ENCODE measurements at regions of chr10 and their contacts with region 1.

Region 1: DNA sequence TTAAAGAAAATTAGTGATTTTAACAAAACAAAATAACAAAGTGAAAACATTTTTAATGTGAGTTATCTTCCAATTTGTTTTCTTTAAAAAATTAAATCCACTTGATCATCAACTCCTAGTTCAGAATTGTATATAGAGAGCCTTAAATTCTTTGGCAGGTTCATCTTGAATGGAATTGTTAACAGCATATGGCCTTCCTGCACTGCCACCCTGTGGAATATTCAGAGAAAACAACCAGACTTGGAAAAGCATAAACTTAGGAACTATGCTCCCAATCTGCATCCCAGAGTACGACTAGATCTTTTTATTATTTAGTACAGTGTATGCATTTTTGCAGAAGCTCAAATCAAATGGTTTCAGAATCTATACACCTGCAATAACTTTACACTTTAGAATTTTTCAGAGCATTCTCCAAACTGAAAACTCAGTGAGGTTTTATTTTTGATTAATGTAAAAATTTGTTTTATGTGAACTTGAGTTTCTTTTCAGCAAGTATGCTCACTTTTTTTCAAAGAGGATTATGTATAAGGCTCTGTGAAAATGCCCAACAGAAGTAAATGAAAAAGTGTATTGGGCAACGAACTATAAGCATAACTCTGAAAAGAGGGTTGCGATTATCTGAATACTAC is 44.9 kb upstream of the ANK3 start:
- DNase-seq: peak; percentile 33 to 55
- H3K4me3 ChIP-seq: no peak overlapping the region
- H3K27ac ChIP-seq: no peak overlapping the region
- H3K4me1 ChIP-seq: no peaks in the 10 kb centered on the region
- H3K27me3 ChIP-seq: no peaks in the 10 kb centered on the region
- CTCF ChIP-seq: peak; percentile 93

Region 2: DNA sequence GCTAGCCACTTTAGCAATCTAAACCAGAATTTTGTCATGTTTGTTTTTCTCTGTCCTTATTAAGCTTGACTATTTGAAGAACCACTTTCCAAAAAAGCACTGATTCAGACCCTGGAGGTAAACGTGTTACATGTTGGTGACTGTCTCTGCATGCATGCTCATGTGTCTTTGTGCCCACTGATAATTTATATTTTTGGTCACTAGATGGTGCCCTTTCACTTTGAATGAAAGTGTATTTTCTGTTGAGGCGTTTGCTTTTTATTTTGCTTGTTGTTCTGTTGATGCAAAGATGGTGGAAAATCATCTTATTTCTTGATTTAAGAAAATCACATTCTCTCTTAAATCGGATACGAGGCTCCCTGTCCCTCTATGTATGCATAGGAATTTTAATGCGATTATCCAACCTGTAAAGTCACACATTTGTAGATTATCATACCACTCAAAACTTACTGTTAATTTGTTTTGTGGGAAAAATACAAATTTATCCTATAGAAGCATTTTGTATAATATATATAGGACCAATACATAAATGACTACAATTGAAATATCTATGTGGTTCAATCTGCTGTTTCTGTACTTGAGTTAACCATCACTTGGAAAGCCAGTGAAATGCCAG is 1652.6 kb before region 1 on chr10:
- CTCF ChIA-PET with region 1: no interaction called
- POLR2A ChIA-PET with region 1: no interaction called
- intact Hi-C with region 1: loop called (anchors 5 kb)
- DNase-seq: peak in 1 of 2 experiments; percentile 4
- H3K4me3 ChIP-seq: no peak overlapping the region
- H3K27ac ChIP-seq: no peak overlapping the region
- H3K4me1 ChIP-seq: no peaks in the 10 kb centered on the region
- H3K27me3 ChIP-seq: no peaks in the 10 kb centered on the region
- CTCF ChIP-seq: peak; percentile 84

Region 3: GRCh38 chr10:59934701-59935100 is 499.8 kb before region 1 on chr10:
- CTCF ChIA-PET with region 1: no interaction called
- POLR2A ChIA-PET with region 1: no interaction called
- intact Hi-C with region 1: no loop called
- DNase-seq: no peak
- H3K4me3 ChIP-seq: no peak overlapping the region
- H3K27ac ChIP-seq: no peak overlapping the region
- H3K4me1 ChIP-seq: no peaks in the 10 kb centered on the region
- H3K27me3 ChIP-seq: no peaks in the 10 kb centered on the region
- CTCF ChIP-seq: no peak

Region 4: DNA sequence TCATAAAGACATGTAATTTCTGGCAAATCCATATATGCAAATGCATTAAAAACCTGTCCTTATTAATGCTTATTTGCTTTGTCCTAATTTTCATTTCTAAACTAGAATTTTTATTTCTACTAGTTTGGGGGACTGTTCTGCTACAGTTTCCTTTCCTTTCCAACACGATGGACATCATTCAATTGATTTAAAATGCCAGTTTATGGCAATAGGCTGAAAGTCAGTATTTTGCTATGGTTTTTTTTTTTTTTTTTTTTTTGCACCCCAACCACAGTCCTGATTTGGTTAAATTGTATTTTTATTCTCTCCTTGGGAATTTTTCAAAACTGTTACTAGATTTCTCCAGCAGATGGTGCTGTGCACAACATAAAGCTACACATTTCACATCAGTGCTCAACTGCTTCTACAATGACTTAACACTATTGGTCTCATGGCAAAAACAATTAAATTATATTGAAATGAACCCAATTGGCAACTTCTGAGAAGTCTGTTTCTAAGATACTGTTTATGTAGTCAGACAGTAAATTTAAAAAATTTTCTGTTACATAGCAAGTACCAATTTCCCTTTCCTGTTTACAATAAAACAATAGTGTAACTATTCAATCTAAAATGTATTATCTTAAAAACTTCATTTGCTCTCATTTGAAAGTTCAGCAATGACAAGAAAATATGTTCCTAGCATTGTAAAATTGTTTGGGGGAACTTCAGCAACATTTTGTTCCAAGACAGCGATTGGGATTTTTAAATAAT is 334.4 kb before region 1 on chr10:
- CTCF ChIA-PET with region 1: no interaction called
- POLR2A ChIA-PET with region 1: no interaction called
- intact Hi-C with region 1: loop called (anchors 1 kb)
- DNase-seq: peak; percentile 15 to 59
- H3K4me3 ChIP-seq: no peak overlapping the region
- H3K27ac ChIP-seq: no peak overlapping the region
- H3K4me1 ChIP-seq: no peaks in the 10 kb centered on the region; the same call in 1 of the 2 replicates
- H3K27me3 ChIP-seq: no peaks in the 10 kb centered on the region
- CTCF ChIP-seq: peak; percentile 86

Region 5: GRCh38 chr10:60208676-60209269 is 225.8 kb before region 1 on chr10:
- CTCF ChIA-PET with region 1: interaction called, 3 read pairs
- POLR2A ChIA-PET with region 1: no interaction called
- intact Hi-C with region 1: loop called (anchors 1 kb)
- DNase-seq: peak in 1 of 2 experiments; percentile 60
- H3K4me3 ChIP-seq: no peak overlapping the region
- H3K27ac ChIP-seq: no peak overlapping the region
- H3K4me1 ChIP-seq: peaks cover 8% of the 10 kb centered on the region
- H3K27me3 ChIP-seq: no peaks in the 10 kb centered on the region
- CTCF ChIP-seq: peak; percentile 89

Region 6: DNA sequence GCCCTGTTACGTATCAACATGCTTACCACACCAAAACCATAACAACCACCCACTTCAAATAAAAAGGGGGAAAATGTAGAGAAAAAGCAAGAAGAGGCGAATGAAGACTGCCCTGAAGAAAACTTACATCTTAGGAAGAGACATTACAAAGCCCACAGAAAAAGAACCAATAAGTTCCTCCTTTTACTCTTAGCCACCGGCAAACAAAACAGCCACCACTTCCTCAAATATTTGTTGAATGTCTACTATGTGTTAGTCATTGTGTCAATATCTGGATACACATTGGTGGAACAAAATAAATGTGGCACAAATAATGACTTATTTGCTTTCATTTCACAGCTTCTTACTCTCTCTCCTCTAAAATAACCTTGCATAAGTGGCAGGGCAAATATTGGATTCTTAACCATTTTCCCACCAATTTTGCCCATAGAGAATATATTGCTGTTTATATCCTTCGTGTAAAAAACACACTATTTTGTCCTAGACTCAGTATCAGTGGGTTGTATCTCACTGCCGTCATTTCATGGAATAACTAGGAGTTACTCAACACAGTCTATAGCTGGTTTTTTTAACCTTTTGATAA is 151.7 kb before region 1 on chr10:
- CTCF ChIA-PET with region 1: no interaction called
- POLR2A ChIA-PET with region 1: no interaction called
- intact Hi-C with region 1: loop called (anchors 5 kb)
- DNase-seq: peak; percentile 32 to 96
- H3K4me3 ChIP-seq: no peak overlapping the region
- H3K27ac ChIP-seq: peak overlapping the region; percentile 52
- H3K4me1 ChIP-seq: peaks cover 24% of the 10 kb centered on the region
- H3K27me3 ChIP-seq: no peaks in the 10 kb centered on the region
- CTCF ChIP-seq: no peak